Psoas muscle (tissue), 8 donors: ENCODE measurements at regions of chr2 and their contacts with region 1.

Region 1: GRCh38 chr2:234500394-234501006 is 3.6 kb upstream of the ARL4C start:
- DNase-seq: peak; percentile 36 to 59
- ATAC-seq: peak in 1 of 4 donors; percentile 26
- H3K4me3 ChIP-seq: no peak overlapping the region
- H3K27ac ChIP-seq: no peak overlapping the region
- H3K4me1 ChIP-seq: peaks cover 6% of the 10 kb centered on the region
- H3K27me3 ChIP-seq: peaks cover 0 to 12% (median 0%) of the 10 kb centered on the region in 3 donors
- CTCF ChIP-seq: peak; percentile 35

Region 2: GRCh38 chr2:234142530-234142929 is 358.0 kb before region 1 on chr2:
- intact Hi-C with region 1: loop called in 1 of 2 experiments (anchors 5 kb)
- DNase-seq: no peak
- ATAC-seq: no peak
- H3K4me3 ChIP-seq: no peak overlapping the region
- H3K27ac ChIP-seq: no peak overlapping the region
- H3K4me1 ChIP-seq: no peaks in the 10 kb centered on the region
- H3K27me3 ChIP-seq: no peaks in the 10 kb centered on the region
- CTCF ChIP-seq: no peak

Region 3: DNA sequence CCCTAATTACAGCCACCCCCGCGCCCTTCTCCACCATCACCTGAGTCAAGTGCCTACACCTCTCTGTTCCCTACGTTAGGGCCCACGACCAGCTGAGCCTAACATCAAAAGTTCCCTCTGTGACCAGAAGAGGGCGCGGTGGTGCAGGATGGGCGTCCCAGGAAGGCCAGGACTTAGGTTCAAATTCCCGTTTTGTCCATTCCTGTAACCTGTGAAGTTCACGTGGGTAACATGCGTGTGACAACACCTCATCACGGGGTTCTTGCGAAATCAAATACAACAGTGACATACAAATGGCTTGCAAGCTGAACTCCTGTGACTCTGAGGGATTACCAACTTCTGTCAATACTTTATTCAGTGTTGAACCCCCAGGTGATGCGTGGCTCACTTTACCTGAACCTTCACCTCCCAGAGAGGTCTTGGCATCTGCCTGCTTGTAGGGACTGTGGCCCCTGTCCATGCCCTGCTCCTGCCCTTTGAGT is 211.5 kb before region 1 on chr2:
- intact Hi-C with region 1: loop called (anchors 5 to 10 kb)
- DNase-seq: peak; percentile 44 to 70
- ATAC-seq: peak in 3 of 4 donors; percentile 19 to 64 (median 61)
- H3K4me3 ChIP-seq: no peak overlapping the region
- H3K27ac ChIP-seq: no peak overlapping the region
- H3K4me1 ChIP-seq: no peaks in the 10 kb centered on the region
- H3K27me3 ChIP-seq: no peaks in the 10 kb centered on the region
- CTCF ChIP-seq: peak; percentile 49